ENCODE measurements at regions of chr17 and their contacts with region 1.

Region 1: DNA sequence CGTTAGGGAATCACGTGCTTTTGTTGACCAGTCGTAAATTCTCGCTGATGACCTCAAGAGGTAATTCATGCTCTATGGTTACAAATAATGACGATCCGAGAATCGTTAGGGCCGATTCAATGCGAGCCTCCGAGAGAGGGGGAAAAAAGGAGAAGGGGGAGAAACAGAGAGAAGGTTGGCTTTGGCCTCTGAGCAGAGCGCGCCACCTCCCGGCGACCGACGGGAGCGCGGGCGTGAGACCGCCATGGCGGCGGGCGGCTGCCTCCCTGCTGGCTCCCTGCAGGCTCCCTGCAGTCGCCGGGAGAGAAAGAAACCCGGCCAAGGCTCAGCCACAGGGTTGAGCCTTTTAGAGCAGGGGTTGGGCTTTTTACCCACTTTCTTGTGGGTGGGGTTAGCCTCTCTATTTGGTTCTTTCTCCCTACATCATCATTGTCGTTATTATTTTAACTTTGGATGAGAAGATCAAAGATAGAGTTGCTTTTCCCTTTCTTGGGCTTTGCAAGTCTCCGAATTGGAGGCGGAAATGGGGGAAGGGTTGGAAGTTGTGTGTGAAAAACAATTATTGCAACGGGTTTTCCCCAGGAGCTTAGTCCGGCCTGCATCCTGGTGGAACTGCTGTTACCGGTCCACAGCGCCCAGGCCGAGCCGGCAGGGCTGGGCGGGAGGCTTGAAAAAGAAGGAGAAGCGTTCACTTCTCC is 410 bp upstream of the HOXB5 start:
- DNase-seq: peak; percentile 52 to 90 (median 75)
- ATAC-seq: peak; percentile 58 to 73 (median 64)
- H3K4me3 ChIP-seq: peak overlapping the region; percentile 15 to 43
- H3K4me3 Mint-ChIP-seq: peak overlapping the region; percentile 70 to 82 (median 76)
- H3K27ac ChIP-seq: no peak overlapping the region
- H3K27ac Mint-ChIP-seq: no peak overlapping the region
- H3K4me1 ChIP-seq: peaks cover 8 to 54% of the 10 kb centered on the region in 2 experiments
- H3K4me1 Mint-ChIP-seq: peaks cover 47 to 53% (median 48%) of the 10 kb centered on the region in 3 donors
- H3K27me3 ChIP-seq: peaks cover 3 to 92% of the 10 kb centered on the region in 2 experiments
- H3K27me3 Mint-ChIP-seq: peaks cover 87 to 88% of the 10 kb centered on the region in 2 donors

Region 2: DNA sequence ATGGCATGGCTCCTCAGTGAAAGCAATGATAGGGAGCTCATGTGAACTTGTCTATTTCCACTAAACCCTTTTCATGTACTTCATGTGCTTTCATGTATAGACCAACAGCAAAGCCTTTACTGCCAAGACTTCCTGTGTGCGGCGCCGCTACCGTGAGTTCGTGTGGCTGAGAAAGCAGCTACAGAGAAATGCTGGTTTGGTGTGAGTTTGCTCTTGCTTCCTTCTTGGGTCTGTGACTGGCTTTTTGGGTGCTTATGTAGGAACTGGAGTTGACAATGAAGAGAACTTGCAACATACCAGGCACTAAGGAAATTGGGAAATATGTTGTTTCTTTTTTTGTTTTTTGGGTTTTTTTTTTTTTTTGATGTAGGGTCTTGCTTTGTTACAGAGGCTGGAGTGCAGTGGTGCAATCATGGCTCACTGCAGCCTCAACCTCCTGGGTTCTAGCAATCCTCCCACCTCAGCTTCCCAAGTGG is 480.8 kb before region 1 on chr17:
- CTCF ChIA-PET with region 1: interaction called in 1 of 2 experiments, 16 read pairs
- POLR2A ChIA-PET with region 1: no interaction called
- DNase-seq: peak; percentile 40 to 73 (median 54)
- ATAC-seq: peak; percentile 90 to 97 (median 96)
- H3K4me3 ChIP-seq: no peak overlapping the region
- H3K4me3 Mint-ChIP-seq: peak overlapping the region; percentile 37 to 49 (median 47)
- H3K27ac ChIP-seq: peak overlapping the region; percentile 57
- H3K27ac Mint-ChIP-seq: peak overlapping the region; percentile 92 to 95
- H3K4me1 ChIP-seq: peaks cover 20 to 43% of the 10 kb centered on the region in 2 experiments
- H3K4me1 Mint-ChIP-seq: peaks cover 37 to 46% (median 45%) of the 10 kb centered on the region in 3 donors
- H3K27me3 ChIP-seq: no peaks in the 10 kb centered on the region
- H3K27me3 Mint-ChIP-seq: no peaks in the 10 kb centered on the region

Region 3: GRCh38 chr17:48307814-48308411 is 286.1 kb before region 1 on chr17:
- CTCF ChIA-PET with region 1: interaction called, 3 to 24 read pairs
- POLR2A ChIA-PET with region 1: no interaction called
- DNase-seq: peak; percentile 8 to 71 (median 39)
- ATAC-seq: peak; percentile 61 to 81 (median 78)
- H3K4me3 ChIP-seq: no peak overlapping the region
- H3K4me3 Mint-ChIP-seq: no peak overlapping the region
- H3K27ac ChIP-seq: no peak overlapping the region
- H3K27ac Mint-ChIP-seq: no peak overlapping the region
- H3K4me1 ChIP-seq: no peaks in the 10 kb centered on the region
- H3K4me1 Mint-ChIP-seq: peaks cover 12 to 37% (median 26%) of the 10 kb centered on the region in 3 donors
- H3K27me3 ChIP-seq: no peaks in the 10 kb centered on the region
- H3K27me3 Mint-ChIP-seq: no peaks in the 10 kb centered on the region

Region 4: DNA sequence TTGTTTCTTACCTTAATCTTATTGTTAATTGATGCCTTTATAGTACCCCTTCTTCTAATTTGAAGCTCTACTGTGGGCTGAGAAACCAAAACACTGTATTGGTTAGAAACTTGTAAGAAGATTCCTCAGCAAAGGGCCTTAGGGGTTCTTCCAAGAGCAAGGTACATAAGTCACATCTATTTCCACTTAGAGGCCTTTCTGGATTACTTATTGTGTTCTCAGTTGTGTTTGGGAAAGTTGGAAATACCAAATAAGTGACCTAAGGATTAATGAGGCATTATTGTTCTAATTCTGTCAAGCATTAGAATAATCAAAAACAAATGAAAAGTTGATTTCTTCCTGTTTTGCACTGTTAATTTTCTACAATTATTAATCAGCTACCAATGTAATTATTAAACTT is 249.7 kb before region 1 on chr17:
- CTCF ChIA-PET with region 1: interaction called in 1 of 2 experiments, 10 read pairs
- POLR2A ChIA-PET with region 1: no interaction called
- DNase-seq: no peak
- ATAC-seq: no peak
- H3K4me3 ChIP-seq: no peak overlapping the region
- H3K4me3 Mint-ChIP-seq: no peak overlapping the region
- H3K27ac ChIP-seq: no peak overlapping the region
- H3K27ac Mint-ChIP-seq: no peak overlapping the region
- H3K4me1 ChIP-seq: no peaks in the 10 kb centered on the region
- H3K4me1 Mint-ChIP-seq: peaks cover 0 to 10% (median 7%) of the 10 kb centered on the region in 3 donors
- H3K27me3 ChIP-seq: no peaks in the 10 kb centered on the region
- H3K27me3 Mint-ChIP-seq: no peaks in the 10 kb centered on the region

Region 5: GRCh38 chr17:48406936-48407567 is 186.9 kb before region 1 on chr17:
- CTCF ChIA-PET with region 1: no interaction called
- POLR2A ChIA-PET with region 1: interaction called in 1 of 2 experiments, 10 read pairs
- DNase-seq: peak in 1 of 35 experiments; percentile 43
- ATAC-seq: peak in 1 of 4 experiments; percentile 38
- H3K4me3 ChIP-seq: no peak overlapping the region
- H3K4me3 Mint-ChIP-seq: peak overlapping the region in 2 of 3 donors; percentile 6 to 30
- H3K27ac ChIP-seq: no peak overlapping the region
- H3K27ac Mint-ChIP-seq: peak overlapping the region; percentile 3 to 56
- H3K4me1 ChIP-seq: peaks cover 14 to 20% of the 10 kb centered on the region in 2 experiments
- H3K4me1 Mint-ChIP-seq: peaks cover 66 to 70% (median 68%) of the 10 kb centered on the region in 3 donors
- H3K27me3 ChIP-seq: no peaks in the 10 kb centered on the region
- H3K27me3 Mint-ChIP-seq: no peaks in the 10 kb centered on the region

Region 6: GRCh38 chr17:48603959-48604769 is 10.2 kb after region 1 on chr17:
- CTCF ChIA-PET with region 1: interaction called, 8 to 13 read pairs
- POLR2A ChIA-PET with region 1: no interaction called
- DNase-seq: no peak
- ATAC-seq: no peak
- H3K4me3 ChIP-seq: no peak overlapping the region
- H3K4me3 Mint-ChIP-seq: peak overlapping the region in 1 of 3 donors; percentile 8
- H3K27ac ChIP-seq: no peak overlapping the region
- H3K27ac Mint-ChIP-seq: peak overlapping the region in 1 of 2 donors; percentile 69
- H3K4me1 ChIP-seq: peaks cover 4 to 36% of the 10 kb centered on the region in 2 experiments
- H3K4me1 Mint-ChIP-seq: peaks cover 4 to 21% (median 12%) of the 10 kb centered on the region in 3 donors
- H3K27me3 ChIP-seq: peaks cover 31 to 88% of the 10 kb centered on the region in 2 experiments
- H3K27me3 Mint-ChIP-seq: peaks cover 84 to 91% of the 10 kb centered on the region in 2 donors

Region 7: DNA sequence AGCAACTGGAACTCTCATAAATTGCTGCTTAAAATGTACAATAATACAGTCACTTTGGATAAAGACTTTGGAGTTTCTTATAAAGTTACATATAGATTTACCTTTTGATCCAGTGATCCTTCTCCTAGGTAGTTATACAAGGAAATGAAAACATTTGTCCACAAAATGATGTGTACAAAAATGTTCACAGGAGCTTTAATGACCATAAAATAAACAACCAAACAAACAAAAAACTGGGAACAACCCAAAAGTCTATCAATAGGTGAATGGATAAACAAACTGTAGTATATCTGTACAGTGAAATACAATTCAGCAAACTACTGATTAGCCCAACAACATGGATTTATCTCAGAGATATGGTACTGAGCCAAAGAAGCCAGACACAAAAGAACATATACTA is 185.4 kb after region 1 on chr17:
- CTCF ChIA-PET with region 1: no interaction called
- POLR2A ChIA-PET with region 1: no interaction called
- DNase-seq: no peak
- ATAC-seq: no peak
- H3K4me3 ChIP-seq: no peak overlapping the region
- H3K4me3 Mint-ChIP-seq: no peak overlapping the region
- H3K27ac ChIP-seq: no peak overlapping the region
- H3K27ac Mint-ChIP-seq: no peak overlapping the region
- H3K4me1 ChIP-seq: no peaks in the 10 kb centered on the region
- H3K4me1 Mint-ChIP-seq: no peaks in the 10 kb centered on the region
- H3K27me3 ChIP-seq: peaks cover 4 to 16% of the 10 kb centered on the region in 2 experiments
- H3K27me3 Mint-ChIP-seq: peaks cover 18 to 19% of the 10 kb centered on the region in 2 donors